Naive thymus-derived CD4-positive, alpha-beta T cell (primary cell): ENCODE measurements at regions of chr6 and their contacts with region 1.

Region 1: GRCh38 chr6:151690768-151691562 is 116.5 kb upstream of the ESR1 start:
- DNase-seq: peak in 6 of 9 donors; percentile 8 to 44 (median 28)
- ATAC-seq: peak; percentile 82
- H3K4me3 ChIP-seq: peak overlapping the region; percentile 45
- H3K4me3 Mint-ChIP-seq: peak overlapping the region; percentile 69 to 91 (median 86)
- H3K27ac ChIP-seq: peak overlapping the region; percentile 67
- H3K27ac Mint-ChIP-seq: peak overlapping the region; percentile 71 to 96 (median 86)
- H3K4me1 ChIP-seq: peaks cover 0 to 4% of the 10 kb centered on the region in 2 donors
- H3K4me1 Mint-ChIP-seq: peaks cover 0 to 34% (median 21%) of the 10 kb centered on the region in 7 donors
- H3K27me3 ChIP-seq: no peaks in the 10 kb centered on the region
- H3K27me3 Mint-ChIP-seq: peaks cover 0 to 10% (median 0%) of the 10 kb centered on the region in 5 donors

Region 2: DNA sequence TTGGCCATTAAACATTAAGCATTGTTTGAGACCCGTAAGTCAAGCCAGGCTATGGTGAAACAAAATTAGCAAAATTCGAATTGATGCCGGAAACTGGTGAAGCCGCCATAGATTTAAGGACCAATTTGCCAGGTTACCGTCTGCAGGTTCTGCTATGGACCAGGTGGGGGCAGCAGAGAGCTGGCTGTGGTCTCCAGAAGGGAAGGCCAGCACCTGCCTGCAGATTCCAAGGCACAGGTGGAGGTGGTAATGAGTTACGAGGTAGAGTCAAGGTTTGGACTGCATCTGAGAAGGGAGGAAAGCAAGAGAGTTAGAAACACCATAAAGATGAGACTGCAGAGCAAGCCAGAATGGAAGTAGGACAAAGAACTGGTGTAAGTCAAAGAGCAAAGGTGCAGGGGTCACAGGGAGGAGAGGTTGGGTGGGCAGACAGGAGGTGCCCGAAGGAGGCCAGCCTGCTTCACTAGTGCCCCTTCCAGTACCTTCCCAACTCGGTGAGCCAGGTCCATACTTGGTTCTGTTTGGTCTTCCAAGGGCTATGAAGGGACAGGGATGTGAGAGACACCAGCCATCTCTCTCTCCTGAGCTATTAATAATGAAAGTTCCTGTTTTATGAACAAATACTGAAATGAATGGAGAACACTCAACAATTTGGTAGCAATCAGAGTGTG is 15.1 kb before region 1 on chr6:
- CTCF ChIA-PET with region 1: interaction called, 11 read pairs
- POLR2A ChIA-PET with region 1: interaction called, 4 read pairs
- intact Hi-C with region 1: loop called in 1 of 2 experiments (anchors 1 kb)
- DNase-seq: peak in 8 of 9 donors; percentile 8 to 54 (median 44)
- ATAC-seq: peak; percentile 79
- H3K4me3 ChIP-seq: no peak overlapping the region
- H3K4me3 Mint-ChIP-seq: no peak overlapping the region
- H3K27ac ChIP-seq: no peak overlapping the region
- H3K27ac Mint-ChIP-seq: peak overlapping the region in 1 of 9 donors; percentile 33
- H3K4me1 ChIP-seq: no peaks in the 10 kb centered on the region
- H3K4me1 Mint-ChIP-seq: peaks cover 0 to 6% (median under 1%) of the 10 kb centered on the region in 7 donors
- H3K27me3 ChIP-seq: no peaks in the 10 kb centered on the region
- H3K27me3 Mint-ChIP-seq: peaks cover 0 to 4% (median under 1%) of the 10 kb centered on the region in 5 donors

Region 3: GRCh38 chr6:151723152-151723551 is 32.2 kb after region 1 on chr6:
- CTCF ChIA-PET with region 1: no interaction called
- POLR2A ChIA-PET with region 1: no interaction called
- intact Hi-C with region 1: loop called (anchors 2 kb)
- DNase-seq: peak in 7 of 9 donors; percentile 9 to 61 (median 37)
- ATAC-seq: peak; percentile 63
- H3K4me3 ChIP-seq: no peak overlapping the region
- H3K4me3 Mint-ChIP-seq: peak overlapping the region in 2 of 10 donors; percentile 28 to 33
- H3K27ac ChIP-seq: no peak overlapping the region
- H3K27ac Mint-ChIP-seq: peak overlapping the region in 7 of 9 donors; percentile 5 to 83 (median 61)
- H3K4me1 ChIP-seq: peaks cover 0 to 4% of the 10 kb centered on the region in 2 donors
- H3K4me1 Mint-ChIP-seq: peaks cover 0 to 57% (median 29%) of the 10 kb centered on the region in 7 donors
- H3K27me3 ChIP-seq: no peaks in the 10 kb centered on the region
- H3K27me3 Mint-ChIP-seq: peaks cover 0 to 7% (median 0%) of the 10 kb centered on the region in 5 donors

Region 4: DNA sequence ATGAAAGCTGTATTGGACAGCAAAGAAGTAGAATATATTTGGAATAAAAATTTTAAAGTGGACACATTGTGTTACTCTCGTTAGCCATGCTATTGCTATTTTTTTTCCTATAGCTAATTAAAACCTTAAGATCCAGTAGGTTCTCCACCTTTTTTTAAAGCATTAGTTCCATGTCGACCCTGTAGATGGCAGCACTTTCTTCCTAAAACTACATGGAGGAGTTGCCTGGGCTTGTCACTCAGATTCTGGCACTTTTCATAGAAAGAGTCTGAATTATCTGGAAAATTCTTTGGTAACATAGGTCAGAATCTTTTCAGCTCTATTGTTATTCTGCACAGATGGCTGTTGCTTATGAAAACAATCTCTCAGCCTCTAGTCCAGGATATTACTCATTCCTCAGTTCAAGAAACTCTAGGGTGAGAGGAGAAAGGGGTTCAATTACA is 74.5 kb after region 1 on chr6:
- CTCF ChIA-PET with region 1: interaction called, 10 read pairs
- POLR2A ChIA-PET with region 1: interaction called, 5 read pairs
- intact Hi-C with region 1: loop called (anchors 1 to 2 kb)
- DNase-seq: peak in 6 of 9 donors; percentile 17 to 55 (median 36)
- ATAC-seq: peak; percentile 64
- H3K4me3 ChIP-seq: no peak overlapping the region
- H3K4me3 Mint-ChIP-seq: no peak overlapping the region
- H3K27ac ChIP-seq: no peak overlapping the region
- H3K27ac Mint-ChIP-seq: no peak overlapping the region
- H3K4me1 ChIP-seq: no peaks in the 10 kb centered on the region
- H3K4me1 Mint-ChIP-seq: peaks cover 0 to 29% (median 10%) of the 10 kb centered on the region in 7 donors
- H3K27me3 ChIP-seq: no peaks in the 10 kb centered on the region
- H3K27me3 Mint-ChIP-seq: peaks cover 0 to 34% (median 7%) of the 10 kb centered on the region in 5 donors

Region 5: DNA sequence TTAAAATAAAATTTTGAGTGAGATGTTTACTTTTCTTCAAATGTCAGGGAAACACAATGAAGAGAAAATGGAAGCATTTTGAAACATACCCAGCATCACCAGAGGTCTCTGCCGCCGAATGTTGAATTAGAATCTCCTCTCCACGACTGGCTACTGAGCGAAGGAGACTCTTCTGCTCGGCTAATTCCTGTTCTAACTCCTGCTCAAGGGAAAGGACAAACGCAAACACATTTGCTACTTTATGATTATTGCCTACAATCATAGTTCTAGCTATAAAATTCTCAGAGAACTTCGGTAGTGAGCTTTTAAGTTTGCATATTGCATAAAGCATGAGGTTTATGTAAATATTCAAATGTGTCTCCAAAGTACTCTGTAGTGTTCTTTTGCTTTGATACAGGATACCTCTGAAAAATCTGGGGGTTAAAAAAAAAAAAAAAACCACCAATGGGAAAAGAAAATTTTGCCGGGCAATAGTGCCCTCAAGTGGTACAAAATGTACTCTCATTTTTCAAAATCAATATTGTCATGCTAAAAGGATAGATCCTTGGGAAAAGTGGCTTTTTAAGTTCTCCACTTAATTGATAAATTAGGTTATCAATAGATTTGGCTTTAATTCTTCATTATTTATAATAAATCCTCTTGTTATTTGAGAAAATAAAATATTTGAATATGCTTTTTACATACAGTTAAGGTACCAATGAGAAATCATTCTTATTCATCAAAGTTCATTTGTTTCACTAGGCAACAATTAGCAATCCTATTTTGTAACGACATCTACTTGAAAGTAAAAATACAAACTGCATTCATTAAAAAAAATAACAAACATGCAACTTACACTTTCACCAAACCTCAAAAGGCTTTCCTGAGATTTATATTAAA is 577.2 kb after region 1 on chr6:
- CTCF ChIA-PET with region 1: interaction called, 9 read pairs
- POLR2A ChIA-PET with region 1: no interaction called
- intact Hi-C with region 1: loop called (anchors 1 kb)
- DNase-seq: peak in 5 of 9 donors; percentile 26 to 45 (median 41)
- ATAC-seq: no peak
- H3K4me3 ChIP-seq: no peak overlapping the region
- H3K4me3 Mint-ChIP-seq: no peak overlapping the region
- H3K27ac ChIP-seq: no peak overlapping the region
- H3K27ac Mint-ChIP-seq: no peak overlapping the region
- H3K4me1 ChIP-seq: no peaks in the 10 kb centered on the region
- H3K4me1 Mint-ChIP-seq: peaks cover 0 to 15% (median 0%) of the 10 kb centered on the region in 7 donors
- H3K27me3 ChIP-seq: no peaks in the 10 kb centered on the region
- H3K27me3 Mint-ChIP-seq: no peaks in the 10 kb centered on the region

Region 6: DNA sequence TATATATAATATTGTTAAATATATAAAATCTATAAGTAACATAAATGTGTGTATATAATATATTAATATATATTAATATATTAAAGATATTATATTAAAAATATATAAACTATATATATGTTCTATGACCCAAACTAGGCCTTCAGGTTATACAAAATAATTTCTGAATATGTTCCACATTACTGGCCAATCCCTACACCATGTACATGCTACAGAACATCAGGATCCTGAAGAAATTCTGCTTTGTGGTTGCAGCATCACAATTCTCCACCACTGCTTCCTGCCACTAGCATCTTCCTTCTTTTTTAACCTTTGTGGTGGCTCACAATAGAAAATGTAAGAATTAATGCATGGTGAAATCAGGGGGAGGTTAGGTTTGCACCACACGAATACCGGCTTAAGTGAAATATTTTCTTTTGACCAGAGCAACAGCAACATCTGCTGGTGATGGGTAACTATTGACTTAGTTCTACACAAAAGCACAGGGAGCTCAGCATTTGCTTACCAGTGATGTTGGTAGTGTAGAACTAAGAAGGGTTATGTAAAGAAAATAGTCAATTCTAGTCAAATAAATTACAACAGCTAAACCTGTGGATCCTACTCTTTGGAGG is 665.6 kb after region 1 on chr6:
- CTCF ChIA-PET with region 1: no interaction called
- POLR2A ChIA-PET with region 1: no interaction called
- intact Hi-C with region 1: loop called in 1 of 2 experiments (anchors 1 kb)
- DNase-seq: peak in 6 of 9 donors; percentile 24 to 46 (median 32)
- ATAC-seq: peak; percentile 63
- H3K4me3 ChIP-seq: no peak overlapping the region
- H3K4me3 Mint-ChIP-seq: no peak overlapping the region
- H3K27ac ChIP-seq: no peak overlapping the region
- H3K27ac Mint-ChIP-seq: no peak overlapping the region
- H3K4me1 ChIP-seq: no peaks in the 10 kb centered on the region
- H3K4me1 Mint-ChIP-seq: no peaks in the 10 kb centered on the region
- H3K27me3 ChIP-seq: no peaks in the 10 kb centered on the region
- H3K27me3 Mint-ChIP-seq: peaks cover 0 to 11% (median 0%) of the 10 kb centered on the region in 5 donors

Region 7: GRCh38 chr6:152948150-152948768 is 1257.3 kb after region 1 on chr6:
- CTCF ChIA-PET with region 1: no interaction called
- POLR2A ChIA-PET with region 1: no interaction called
- intact Hi-C with region 1: loop called in 1 of 2 experiments (anchors 2 kb)
- DNase-seq: peak in 5 of 9 donors; percentile 9 to 35 (median 26)
- ATAC-seq: peak; percentile 72
- H3K4me3 ChIP-seq: no peak overlapping the region
- H3K4me3 Mint-ChIP-seq: peak overlapping the region in 7 of 10 donors; percentile 3 to 56 (median 41)
- H3K27ac ChIP-seq: no peak overlapping the region
- H3K27ac Mint-ChIP-seq: no peak overlapping the region
- H3K4me1 ChIP-seq: no peaks in the 10 kb centered on the region
- H3K4me1 Mint-ChIP-seq: peaks cover 0 to 11% (median 9%) of the 10 kb centered on the region in 7 donors
- H3K27me3 ChIP-seq: peaks cover 0 to 7% of the 10 kb centered on the region in 2 donors
- H3K27me3 Mint-ChIP-seq: peaks cover 17 to 44% (median 25%) of the 10 kb centered on the region in 5 donors